ENCODE measurements at regions of chr11 and their contacts with region 1.

Region 1: DNA sequence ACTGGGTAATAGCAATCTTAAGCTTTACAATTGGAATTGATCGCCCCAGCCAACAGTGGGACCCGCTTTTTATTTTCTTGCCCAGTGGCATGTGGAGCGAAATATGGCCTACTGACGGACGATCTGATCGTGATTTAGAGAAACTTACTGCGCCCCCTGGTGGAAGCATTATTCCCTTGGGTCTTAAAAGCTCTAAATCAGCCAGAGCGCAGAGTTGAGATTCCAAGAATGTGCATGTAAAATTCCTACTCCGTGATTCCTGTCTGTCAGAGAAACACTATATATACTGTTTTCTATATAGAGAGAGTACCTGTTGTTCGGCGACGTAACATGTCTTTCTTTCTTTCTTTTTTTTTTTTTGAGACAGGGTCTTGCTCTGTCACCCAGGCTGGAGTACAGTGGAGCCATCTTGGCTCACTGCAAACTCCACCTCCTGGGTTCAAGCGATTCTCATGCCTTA is 3.7 kb upstream of the DPF2 start:
- DNase-seq: peak; percentile 76 to 80
- ATAC-seq: peak; percentile 60 to 67
- H3K4me3 ChIP-seq: no peak overlapping the region
- H3K27ac ChIP-seq: peak overlapping the region in 2 of 4 donors; percentile 35 to 45
- H3K4me1 ChIP-seq: peaks cover 7 to 10% of the 10 kb centered on the region in 2 donors
- H3K27me3 ChIP-seq: no peaks in the 10 kb centered on the region
- CTCF ChIP-seq: peak; percentile 75 to 86 (median 84)
- POLR2A ChIP-seq: no peak

Region 2: DNA sequence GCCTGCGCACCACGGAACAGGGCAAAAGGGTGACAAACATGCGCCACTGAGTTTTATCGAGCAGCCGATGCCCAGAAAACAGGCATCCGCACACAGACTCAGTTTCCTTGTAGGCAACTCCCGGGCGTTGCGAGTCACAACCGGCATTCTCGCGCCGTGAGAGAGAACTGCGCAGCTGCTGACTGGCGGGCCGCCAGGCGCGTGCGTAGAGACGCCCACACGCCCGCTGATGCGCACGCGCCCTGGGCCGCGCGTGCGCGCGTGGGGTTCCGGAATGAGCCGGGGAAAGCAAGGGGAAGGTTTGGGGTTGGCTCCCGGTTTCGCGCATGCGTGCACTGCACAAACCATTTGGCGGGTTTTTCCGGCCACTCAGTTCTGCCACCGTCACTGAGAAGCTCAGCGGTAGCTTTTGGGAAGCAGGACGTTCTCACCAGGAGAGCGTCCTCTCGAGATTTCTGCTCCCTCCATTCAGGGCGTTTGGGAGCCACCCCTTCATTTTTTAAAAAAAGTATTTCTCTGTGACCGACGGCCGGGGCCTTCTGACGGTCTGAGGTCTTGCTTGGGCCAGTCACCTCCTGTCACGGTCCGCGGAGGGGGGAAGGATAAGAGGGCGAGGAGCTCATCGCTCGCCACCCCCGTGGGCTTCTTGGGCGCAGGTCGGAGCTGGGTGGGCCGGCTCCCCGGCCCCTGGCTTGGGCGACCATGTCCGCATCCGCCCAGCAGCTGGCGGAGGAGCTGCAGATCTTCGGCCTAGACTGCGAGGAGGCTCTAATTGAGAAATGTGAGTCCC is 68.2 kb before region 1 on chr11 and contains the start of gene POLA2:
- in situ Hi-C with region 1: no loop called
- intact Hi-C with region 1: loop called (anchors 5 kb)
- DNase-seq: peak; percentile 89 to 94
- ATAC-seq: peak; percentile 94 to 98
- H3K4me3 ChIP-seq: peak within 1 kb of the TSS; percentile 75 to 89 (median 78)
- H3K27ac ChIP-seq: peak within 1 kb of the TSS; percentile 87 to 97 (median 93)
- H3K4me1 ChIP-seq: peaks cover 11 to 12% of the 10 kb centered on the region in 2 donors
- H3K27me3 ChIP-seq: no peaks in the 10 kb centered on the region
- CTCF ChIP-seq: no peak
- POLR2A ChIP-seq: peak; percentile 69 to 81
- total RNA-seq, gene POLA2: 2.9 to 9.2 (median 6.9) TPM

Region 3: DNA sequence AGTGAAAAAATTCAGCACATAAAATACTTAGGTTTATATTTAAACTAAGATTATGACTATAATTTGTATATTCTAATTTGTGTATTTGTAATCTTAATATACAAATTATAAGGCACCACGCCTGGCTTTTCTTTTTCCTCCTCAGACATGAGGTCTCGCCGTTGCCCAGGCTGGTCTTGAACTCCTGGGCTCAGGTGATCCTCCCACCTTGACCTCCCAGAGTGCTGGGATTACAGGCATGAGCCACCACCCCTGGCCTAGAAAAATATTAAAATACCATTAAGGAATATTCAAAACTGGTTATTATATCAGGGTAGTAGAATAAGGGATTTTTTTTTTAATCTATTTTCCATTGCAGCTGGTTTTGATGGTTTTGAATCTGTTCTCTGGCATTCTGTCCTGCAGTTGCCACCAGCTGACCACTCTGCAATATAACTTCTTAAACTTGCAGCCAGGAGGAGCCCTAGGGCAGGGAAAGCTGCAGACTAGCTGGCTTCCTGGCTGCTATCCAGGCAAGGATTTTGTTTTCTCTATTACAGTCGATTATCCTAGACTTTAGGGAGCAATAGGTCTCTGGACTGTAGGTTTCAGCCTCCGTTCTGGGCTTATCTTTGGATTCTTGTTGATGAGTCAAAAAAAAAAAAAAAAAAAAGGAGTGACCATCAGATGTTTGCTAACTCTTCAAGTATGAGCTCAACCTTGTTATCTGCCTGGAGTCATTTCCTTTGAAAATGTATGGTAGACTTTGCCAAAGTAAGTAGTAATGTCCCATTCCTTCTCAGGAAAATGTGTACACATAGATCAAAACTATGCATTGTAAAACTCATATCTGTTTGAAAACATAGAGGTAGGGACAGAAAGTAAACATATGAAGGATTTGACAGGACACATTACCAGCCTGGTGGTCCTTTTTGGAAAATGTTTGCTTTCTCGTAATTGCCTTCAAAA is 55.0 kb before region 1 on chr11:
- in situ Hi-C with region 1: loop called in 3 of 4 experiments (anchors 5 kb)
- intact Hi-C with region 1: loop called (anchors 1 kb)
- DNase-seq: peak; percentile 69 to 73
- ATAC-seq: peak; percentile 87 to 92
- H3K4me3 ChIP-seq: no peak overlapping the region
- H3K27ac ChIP-seq: peak overlapping the region in 2 of 4 donors; percentile 22 to 30
- H3K4me1 ChIP-seq: peaks cover 0 to 5% of the 10 kb centered on the region in 2 donors
- H3K27me3 ChIP-seq: no peaks in the 10 kb centered on the region
- CTCF ChIP-seq: peak; percentile 79 to 93 (median 90)
- POLR2A ChIP-seq: no peak

Region 4: DNA sequence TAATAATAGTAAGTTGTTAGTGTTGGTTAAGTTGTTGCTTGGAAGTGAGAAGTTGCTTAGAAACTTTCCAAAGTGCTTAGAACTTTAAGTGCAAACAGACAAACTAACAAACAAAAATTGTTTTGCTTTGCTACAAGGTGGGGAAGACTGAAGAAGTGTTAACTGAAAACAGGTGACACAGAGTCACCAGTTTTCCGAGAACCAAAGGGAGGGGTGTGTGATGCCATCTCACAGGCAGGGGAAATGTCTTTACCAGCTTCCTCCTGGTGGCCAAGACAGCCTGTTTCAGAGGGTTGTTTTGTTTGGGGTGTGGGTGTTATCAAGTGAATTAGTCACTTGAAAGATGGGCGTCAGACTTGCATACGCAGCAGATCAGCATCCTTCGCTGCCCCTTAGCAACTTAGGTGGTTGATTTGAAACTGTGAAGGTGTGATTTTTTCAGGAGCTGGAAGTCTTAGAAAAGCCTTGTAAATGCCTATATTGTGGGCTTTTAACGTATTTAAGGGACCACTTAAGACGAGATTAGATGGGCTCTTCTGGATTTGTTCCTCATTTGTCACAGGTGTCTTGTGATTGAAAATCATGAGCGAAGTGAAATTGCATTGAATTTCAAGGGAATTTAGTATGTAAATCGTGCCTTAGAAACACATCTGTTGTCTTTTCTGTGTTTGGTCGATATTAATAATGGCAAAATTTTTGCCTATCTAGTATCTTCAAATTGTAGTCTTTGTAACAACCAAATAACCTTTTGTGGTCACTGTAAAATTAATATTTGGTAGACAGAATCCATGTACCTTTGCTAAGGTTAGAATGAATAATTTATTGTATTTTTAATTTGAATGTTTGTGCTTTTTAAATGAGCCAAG is 95.4 kb after region 1 on chr11:
- in situ Hi-C with region 1: no loop called
- intact Hi-C with region 1: no loop called
- DNase-seq: peak in 1 of 2 donors; percentile 57
- ATAC-seq: no peak
- H3K4me3 ChIP-seq: peak overlapping the region; percentile 81 to 95 (median 90)
- H3K27ac ChIP-seq: peak overlapping the region; percentile 98 to 100 (median 100)
- H3K4me1 ChIP-seq: peaks cover 31 to 37% of the 10 kb centered on the region in 2 donors
- H3K27me3 ChIP-seq: no peaks in the 10 kb centered on the region
- CTCF ChIP-seq: peak in 2 of 5 experiments; percentile 15 to 30
- POLR2A ChIP-seq: no peak

Measured in gastrocnemius medialis (tissue), 4 donors.